ENCODE measurements at regions of chr14 and their contacts with region 1.

Region 1: DNA sequence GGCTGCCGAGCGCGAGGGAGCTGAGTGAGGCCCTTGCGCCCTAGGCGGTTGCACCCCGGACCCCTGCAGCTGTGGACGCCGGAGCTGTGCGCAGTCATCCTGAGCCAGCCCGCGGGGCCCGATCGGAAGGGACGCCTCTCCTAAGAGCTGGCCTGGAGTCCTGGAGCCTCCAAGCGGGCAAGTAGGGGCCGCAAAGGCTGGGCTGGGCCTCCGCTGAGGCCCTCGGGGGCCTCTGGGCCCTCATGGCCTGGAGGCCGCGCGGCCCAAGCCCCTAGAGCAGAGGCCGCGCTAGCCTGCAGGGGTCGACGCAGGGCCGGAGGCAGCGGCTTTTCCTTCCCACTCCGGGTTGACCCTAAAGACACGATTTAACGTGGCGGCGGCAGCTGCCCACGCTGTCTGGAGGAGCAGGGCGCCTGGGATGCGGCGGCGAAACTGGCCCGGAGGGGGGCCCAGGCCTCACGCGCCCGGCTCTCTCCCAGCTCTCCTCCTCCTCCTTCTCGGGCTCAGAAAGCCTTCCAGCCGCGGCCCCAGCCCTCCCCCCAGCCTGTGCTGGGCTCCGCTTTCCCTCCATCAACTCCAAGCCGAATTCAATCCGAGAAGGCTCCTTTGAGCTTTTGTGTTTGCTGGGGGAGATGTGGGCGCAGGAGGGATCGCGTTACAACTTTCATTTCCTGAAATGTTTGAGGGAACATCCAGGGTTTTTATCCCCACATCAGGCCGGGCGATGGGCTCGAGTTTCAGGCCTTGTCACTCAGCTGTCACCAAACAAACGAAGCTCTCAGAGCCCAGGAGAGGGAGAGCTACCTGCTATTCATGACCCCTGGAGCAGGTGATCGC is 11.6 kb downstream of the SIX1 start:
- DNase-seq: peak in 1 of 2 experiments; percentile 82
- H3K4me3 ChIP-seq: peak overlapping the region; percentile 29 to 63 (median 54)
- H3K27ac ChIP-seq: no peak overlapping the region
- H3K4me1 ChIP-seq: peaks cover 13 to 25% (median 17%) of the 10 kb centered on the region in 4 experiments
- H3K27me3 ChIP-seq: peaks cover 38 to 73% (median 57%) of the 10 kb centered on the region in 4 experiments
- CTCF ChIP-seq: peak in 1 of 3 experiments; percentile 5; a peak in 1 of 4 replicates
- EP300 ChIP-seq: no peak
- POLR2A ChIP-seq: no peak
- RAD21 ChIP-seq: peak in 1 of 2 experiments; percentile 15; a peak in 1 of 4 replicates

Region 2: GRCh38 chr14:60622917-60623257 is 14.8 kb before region 1 on chr14:
- CTCF ChIA-PET with region 1: interaction called, 24 read pairs
- POLR2A ChIA-PET with region 1: interaction called, 3 read pairs
- DNase-seq: no peak
- H3K4me3 ChIP-seq: no peak overlapping the region
- H3K27ac ChIP-seq: no peak overlapping the region
- H3K4me1 ChIP-seq: 0 out of 7 replicates have a peak, but pooled peaks cover 0 to 2% (median 0%) of the 10 kb centered on the region in 4 experiments
- H3K27me3 ChIP-seq: no peaks in the 10 kb centered on the region
- CTCF ChIP-seq: no peak
- EP300 ChIP-seq: no peak
- POLR2A ChIP-seq: no peak
- RAD21 ChIP-seq: no peak

Region 3: GRCh38 chr14:60648934-60649874 is 11.5 kb after region 1 on chr14 and contains the start of gene SIX1:
- CTCF ChIA-PET with region 1: interaction called, 34 read pairs
- POLR2A ChIA-PET with region 1: interaction called, 55 read pairs
- DNase-seq: peak in 1 of 2 experiments; percentile 89
- H3K4me3 ChIP-seq: peak within 1 kb of the TSS; percentile 30 to 63 (median 42)
- H3K27ac ChIP-seq: no peak within 1 kb of the TSS
- H3K4me1 ChIP-seq: peaks cover 10 to 41% (median 25%) of the 10 kb centered on the region in 4 experiments
- H3K27me3 ChIP-seq: peaks cover 78 to 98% (median 89%) of the 10 kb centered on the region in 4 experiments
- CTCF ChIP-seq: no peak
- EP300 ChIP-seq: no peak
- POLR2A ChIP-seq: no peak
- RAD21 ChIP-seq: no peak; a peak in 1 of 4 replicates
- total RNA-seq, gene SIX1: 0.46 and 0.69 TPM in 2 replicates

Region 4: DNA sequence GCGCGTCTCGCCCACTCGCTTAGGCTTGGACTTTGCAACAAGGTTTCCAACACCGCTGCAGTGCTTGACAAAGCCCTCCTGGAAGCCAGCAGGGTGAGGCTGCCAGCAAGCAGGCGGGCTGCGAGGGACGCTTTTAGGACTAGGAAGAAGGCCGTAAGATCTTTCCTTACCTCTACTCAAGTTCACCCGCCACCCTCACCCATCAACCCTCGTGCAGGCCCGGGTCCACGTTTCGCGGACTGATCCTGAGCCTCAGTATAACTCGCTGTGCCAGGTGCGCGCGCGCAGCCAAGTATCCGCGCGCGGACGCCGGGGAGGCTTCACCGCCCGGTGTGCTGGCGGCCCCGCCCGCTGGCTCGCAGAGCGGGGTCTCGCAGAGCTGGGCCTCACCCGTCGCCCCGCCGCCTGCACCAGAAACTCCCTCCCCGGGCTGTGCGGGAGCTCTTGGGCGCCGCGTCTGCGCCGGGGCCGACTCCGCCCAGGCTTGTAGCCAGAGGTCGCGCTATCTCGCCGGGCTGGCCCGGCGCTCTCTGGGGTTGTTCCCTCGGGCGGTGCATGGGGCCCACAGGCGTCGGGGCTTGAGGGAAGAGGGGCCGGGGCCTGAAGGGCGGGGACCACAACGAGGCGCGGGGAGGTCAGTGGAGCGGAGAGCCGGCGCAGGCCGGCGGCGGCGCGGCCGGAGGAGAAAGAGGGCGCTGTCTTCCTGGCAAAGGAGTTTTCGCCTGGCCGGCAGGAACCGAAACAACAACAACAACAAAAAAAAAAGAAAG is 19.2 kb after region 1 on chr14:
- CTCF ChIA-PET with region 1: interaction called, 34 read pairs
- POLR2A ChIA-PET with region 1: interaction called, 55 read pairs
- DNase-seq: peak in 1 of 2 experiments; percentile 87
- H3K4me3 ChIP-seq: peak overlapping the region; percentile 57 to 77 (median 64)
- H3K27ac ChIP-seq: no peak overlapping the region
- H3K4me1 ChIP-seq: peaks cover 11 to 28% (median 17%) of the 10 kb centered on the region in 4 experiments
- H3K27me3 ChIP-seq: peaks cover 56 to 80% (median 75%) of the 10 kb centered on the region in 4 experiments
- CTCF ChIP-seq: peak; percentile 30 to 51 (median 41)
- EP300 ChIP-seq: no peak
- POLR2A ChIP-seq: no peak
- RAD21 ChIP-seq: peak; percentile 71 to 72

Region 5: GRCh38 chr14:61252369-61253063 is 614.8 kb after region 1 on chr14:
- CTCF ChIA-PET with region 1: interaction called, 13 read pairs
- POLR2A ChIA-PET with region 1: no interaction called
- DNase-seq: peak; percentile 59 to 65
- H3K4me3 ChIP-seq: no peak overlapping the region
- H3K27ac ChIP-seq: no peak overlapping the region
- H3K4me1 ChIP-seq: peaks cover 0 to 3% (median 0%) of the 10 kb centered on the region in 4 experiments; a peak in 5 of 7 replicates
- H3K27me3 ChIP-seq: peaks cover 0 to 8% (median 6%) of the 10 kb centered on the region in 4 experiments; a peak in 3 of 7 replicates
- CTCF ChIP-seq: peak; percentile 69 to 91 (median 87)
- EP300 ChIP-seq: no peak
- POLR2A ChIP-seq: no peak
- RAD21 ChIP-seq: peak; percentile 99